Activated B cell treated with CpG ODN at 0.5 μM for 24 hours (primary cell): ENCODE measurements at regions of chr5 and their contacts with region 1.

Region 1: DNA sequence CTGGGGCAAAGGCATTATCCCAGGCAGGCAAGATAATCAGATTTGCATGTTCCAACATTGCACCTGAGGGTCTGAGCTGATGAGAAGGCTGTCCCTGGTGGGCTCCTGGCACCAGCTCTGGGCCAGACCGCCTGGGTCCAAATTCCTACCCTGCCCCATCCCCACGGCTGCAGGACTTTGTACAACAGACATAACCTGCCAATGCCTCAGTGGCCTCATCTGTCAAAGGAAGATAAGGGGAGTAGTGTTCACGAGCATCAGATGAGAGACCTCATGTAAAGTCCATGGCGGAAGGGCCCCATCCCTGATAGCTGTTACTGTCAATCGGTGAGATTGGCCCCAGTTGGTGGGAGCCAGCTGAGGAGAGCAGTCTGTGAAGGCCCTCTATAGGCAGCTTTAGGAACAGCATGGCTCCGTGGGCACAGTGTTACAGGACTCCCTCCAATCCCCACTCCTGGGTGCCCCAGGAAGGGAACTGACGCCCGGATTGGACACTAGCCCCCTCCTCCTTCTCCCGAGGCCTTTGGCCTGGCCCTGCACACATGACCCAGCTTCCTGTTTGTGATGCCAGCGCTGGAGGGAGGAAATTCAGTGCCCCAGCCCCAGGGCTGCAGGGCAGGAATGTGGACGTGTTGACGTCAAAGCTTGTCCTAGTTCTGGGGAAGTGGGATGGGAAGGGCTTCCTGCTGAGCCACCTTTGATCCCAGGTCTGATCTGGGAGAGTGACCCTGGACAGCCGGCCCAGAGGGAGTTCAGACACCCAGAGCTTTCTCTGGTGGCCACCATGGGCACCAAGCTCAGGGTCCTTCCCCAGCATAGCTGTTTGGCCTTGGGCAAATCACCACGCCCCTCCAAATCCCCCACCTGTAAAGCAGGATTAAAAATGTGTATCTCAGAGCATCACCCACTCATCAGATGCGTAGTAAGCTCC is 56.2 kb downstream of the DUSP1 start:
- DNase-seq: peak; percentile 54
- ATAC-seq: peak; percentile 82
- H3K4me3 Mint-ChIP-seq: no peak overlapping the region
- H3K27ac Mint-ChIP-seq: no peak overlapping the region
- H3K4me1 Mint-ChIP-seq: peaks cover 8% of the 10 kb centered on the region
- H3K27me3 Mint-ChIP-seq: peaks cover 15% of the 10 kb centered on the region
- CTCF ChIP-seq: peak; percentile 48

Region 2: GRCh38 chr5:172849606-172850453 is 135.1 kb after region 1 on chr5:
- CTCF ChIA-PET with region 1: interaction called, 7 read pairs
- POLR2A ChIA-PET with region 1: interaction called, 3 read pairs
- intact Hi-C with region 1: loop called (anchors 5 kb)
- DNase-seq: peak; percentile 58
- ATAC-seq: peak; percentile 89
- H3K4me3 Mint-ChIP-seq: peak overlapping the region; percentile 64
- H3K27ac Mint-ChIP-seq: peak overlapping the region; percentile 88
- H3K4me1 Mint-ChIP-seq: peaks cover 76% of the 10 kb centered on the region
- H3K27me3 Mint-ChIP-seq: no peaks in the 10 kb centered on the region
- CTCF ChIP-seq: no peak

Region 3: DNA sequence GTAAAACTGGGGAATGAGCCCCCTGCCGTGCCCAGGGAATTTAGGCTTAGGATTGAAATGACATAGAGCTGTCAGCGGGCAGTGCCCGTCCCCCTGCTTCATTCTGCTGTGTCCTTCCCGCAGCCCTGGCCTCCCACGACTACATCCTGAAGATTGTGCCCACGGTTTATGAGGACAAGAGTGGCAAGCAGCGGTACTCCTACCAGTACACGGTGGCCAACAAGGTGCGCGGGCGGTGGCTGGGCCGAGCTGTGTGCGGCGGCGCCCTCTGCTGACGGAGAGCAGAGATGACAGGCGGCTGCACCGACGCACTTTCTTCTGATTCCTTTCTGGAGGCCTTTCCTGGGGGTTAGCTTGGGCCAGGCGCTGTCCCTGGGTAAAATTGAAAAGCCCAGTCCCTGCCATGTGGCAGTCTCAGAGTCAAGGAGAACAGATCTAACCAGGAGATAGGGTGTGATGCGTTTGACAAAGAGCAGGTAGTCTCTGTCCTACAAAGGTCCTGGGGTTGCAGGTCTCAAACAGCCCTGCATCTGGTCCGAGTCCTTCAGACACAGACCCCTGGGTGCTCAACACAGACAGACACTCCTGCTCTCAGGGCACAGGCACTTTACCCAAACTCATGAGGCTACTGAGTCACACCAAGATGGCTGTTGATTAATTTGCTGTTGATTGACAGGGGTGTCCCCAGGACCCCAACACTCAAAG is 217.7 kb after region 1 on chr5:
- CTCF ChIA-PET with region 1: interaction called, 194 read pairs
- POLR2A ChIA-PET with region 1: interaction called, 7 read pairs
- intact Hi-C with region 1: loop called (anchors 1 kb)
- DNase-seq: peak; percentile 58
- ATAC-seq: peak; percentile 92
- H3K4me3 Mint-ChIP-seq: no peak overlapping the region
- H3K27ac Mint-ChIP-seq: no peak overlapping the region
- H3K4me1 Mint-ChIP-seq: peaks cover 17% of the 10 kb centered on the region
- H3K27me3 Mint-ChIP-seq: no peaks in the 10 kb centered on the region
- CTCF ChIP-seq: peak; percentile 81

Region 4: GRCh38 chr5:173144200-173145176 is 429.7 kb after region 1 on chr5 and contains the start of gene BNIP1:
- CTCF ChIA-PET with region 1: no interaction called
- POLR2A ChIA-PET with region 1: no interaction called
- intact Hi-C with region 1: loop called (anchors 1 kb)
- DNase-seq: peak; percentile 97
- ATAC-seq: peak; percentile 90
- H3K4me3 Mint-ChIP-seq: peak within 1 kb of the TSS; percentile 99
- H3K27ac Mint-ChIP-seq: peak within 1 kb of the TSS; percentile 97
- H3K4me1 Mint-ChIP-seq: peaks cover 12% of the 10 kb centered on the region
- H3K27me3 Mint-ChIP-seq: no peaks in the 10 kb centered on the region
- CTCF ChIP-seq: peak; percentile 54
- total RNA-seq, gene BNIP1: 17.9 and 20.2 TPM in 2 replicates

Region 5: DNA sequence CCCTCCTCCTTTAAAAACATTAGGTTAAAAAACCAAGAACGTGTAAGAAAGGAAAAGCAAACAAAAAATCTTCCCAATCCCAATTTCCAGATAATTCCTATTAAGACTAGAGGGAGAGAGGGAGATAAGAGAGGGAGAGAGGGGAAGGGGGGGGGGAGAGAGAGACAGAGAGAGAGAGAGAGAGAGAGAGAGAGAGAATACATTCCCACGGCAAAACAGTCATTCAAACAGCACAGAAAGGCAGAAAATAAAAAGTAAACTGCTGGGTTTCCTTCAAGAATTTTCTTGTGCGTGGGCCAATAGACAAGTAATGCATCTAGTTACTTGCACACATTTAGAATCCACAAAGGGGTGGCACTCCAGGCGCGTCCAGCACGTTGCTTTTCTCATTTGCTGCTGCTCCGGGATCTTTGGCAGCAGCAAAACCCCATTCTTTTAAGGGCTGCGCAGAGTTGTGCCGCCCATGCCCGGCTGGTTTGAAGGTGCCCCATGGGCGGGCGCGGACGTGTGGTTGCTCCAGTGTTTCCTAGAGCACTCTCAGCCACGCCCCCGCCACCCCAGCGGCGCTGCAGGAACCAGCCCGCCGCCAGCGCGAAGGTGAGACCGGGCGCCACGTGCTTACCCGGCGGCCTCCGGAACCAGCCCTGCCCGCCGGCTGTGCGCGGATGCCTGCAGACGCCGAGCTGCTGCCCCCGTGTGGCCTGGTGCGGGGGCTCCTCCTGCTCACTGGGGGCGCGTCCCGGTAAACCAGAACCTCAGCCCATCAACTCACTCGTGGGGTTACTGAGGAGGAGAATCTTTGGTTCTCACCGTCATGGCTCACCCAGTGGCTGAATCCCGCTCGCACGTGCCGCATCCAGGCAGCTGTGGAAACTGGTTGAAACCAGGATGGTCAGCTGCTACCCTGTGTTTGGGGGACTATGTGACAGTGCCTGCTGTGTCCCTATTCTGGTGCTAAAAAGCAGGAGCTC is 568.8 kb after region 1 on chr5:
- CTCF ChIA-PET with region 1: no interaction called
- POLR2A ChIA-PET with region 1: no interaction called
- intact Hi-C with region 1: loop called (anchors 5 kb)
- DNase-seq: peak; percentile 29
- ATAC-seq: peak; percentile 89
- H3K4me3 Mint-ChIP-seq: no peak overlapping the region
- H3K27ac Mint-ChIP-seq: no peak overlapping the region
- H3K4me1 Mint-ChIP-seq: peaks cover 9% of the 10 kb centered on the region
- H3K27me3 Mint-ChIP-seq: peaks cover 60% of the 10 kb centered on the region
- CTCF ChIP-seq: no peak